Lower leg skin (tissue), 4 donors: ENCODE measurements at regions of chr2 and their contacts with region 1.

Region 1: DNA sequence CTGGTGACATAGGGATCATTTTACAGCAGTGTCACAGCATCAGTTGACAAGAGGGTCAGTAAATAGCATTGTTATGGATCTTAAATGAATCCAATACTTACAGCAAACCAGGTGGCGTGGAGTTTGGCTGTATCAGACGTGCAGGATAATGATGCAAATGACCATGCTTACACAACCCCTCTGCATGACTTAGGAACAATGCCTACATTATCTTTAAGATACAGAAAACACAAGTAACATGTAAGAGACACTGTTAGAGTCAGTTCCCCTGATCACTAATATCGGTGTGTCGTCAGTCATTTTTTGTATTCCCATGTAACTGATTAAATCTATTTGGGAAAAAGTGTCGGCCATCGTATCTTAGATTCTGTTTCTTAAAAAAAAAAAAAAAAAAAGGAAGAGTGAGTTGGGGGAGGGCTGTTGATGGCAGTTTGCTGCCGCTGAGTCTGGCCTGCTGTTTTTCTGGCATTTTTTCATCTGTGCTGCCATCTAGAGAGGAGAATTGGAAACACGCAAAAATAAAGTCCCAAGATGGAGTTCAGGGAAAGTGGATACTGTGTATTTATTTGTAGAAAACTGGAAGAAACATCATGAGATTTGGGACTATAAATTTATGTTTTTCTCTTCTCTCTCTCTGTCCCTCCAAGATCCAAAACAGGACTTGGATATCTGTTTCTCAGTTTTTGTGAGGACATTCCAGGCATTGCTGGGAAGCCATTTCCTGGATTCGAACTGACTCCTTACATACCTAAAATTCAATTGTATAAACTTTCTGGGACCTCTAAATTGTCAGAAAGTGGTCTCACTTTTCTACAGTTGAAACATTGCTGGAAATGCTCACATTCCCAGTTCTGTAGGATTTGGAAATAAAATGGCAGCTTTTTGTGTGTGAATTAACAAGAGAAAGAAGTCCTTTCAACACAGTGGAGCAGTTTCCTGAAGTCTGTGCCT is 60.3 kb upstream of the AGPS start:
- DNase-seq: peak in 1 of 2 donors; percentile 47
- H3K4me3 ChIP-seq: no peak overlapping the region
- CTCF ChIP-seq: no peak
- POLR2A ChIP-seq: no peak

Region 2: DNA sequence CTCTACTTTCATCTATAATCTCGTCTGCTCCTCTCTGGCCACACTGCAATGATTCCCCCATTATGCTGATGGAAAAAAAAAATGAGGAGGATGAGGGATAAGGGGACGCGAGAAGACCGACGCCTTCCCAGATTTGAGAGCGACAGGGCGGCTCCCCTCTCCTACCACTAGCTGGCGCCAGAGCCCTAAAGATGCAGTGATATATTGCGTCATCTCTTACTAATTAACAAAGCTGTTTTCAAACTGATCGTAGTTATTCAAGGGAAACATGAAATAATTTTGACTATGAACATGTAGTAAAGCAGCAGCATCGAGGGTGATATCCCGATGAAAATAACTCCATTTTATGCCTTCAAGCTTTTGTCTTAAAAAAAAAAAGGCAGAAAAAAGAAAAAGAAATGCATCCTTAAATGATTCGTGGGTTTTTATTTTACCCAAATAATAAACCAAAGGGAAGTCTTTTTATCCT is 167.7 kb before region 1 on chr2:
- intact Hi-C with region 1: loop called (anchors 5 kb)
- DNase-seq: peak; percentile 89 to 95
- H3K4me3 ChIP-seq: no peak overlapping the region
- CTCF ChIP-seq: peak in 2 of 3 donors; percentile 66 to 96
- POLR2A ChIP-seq: no peak

Region 3: DNA sequence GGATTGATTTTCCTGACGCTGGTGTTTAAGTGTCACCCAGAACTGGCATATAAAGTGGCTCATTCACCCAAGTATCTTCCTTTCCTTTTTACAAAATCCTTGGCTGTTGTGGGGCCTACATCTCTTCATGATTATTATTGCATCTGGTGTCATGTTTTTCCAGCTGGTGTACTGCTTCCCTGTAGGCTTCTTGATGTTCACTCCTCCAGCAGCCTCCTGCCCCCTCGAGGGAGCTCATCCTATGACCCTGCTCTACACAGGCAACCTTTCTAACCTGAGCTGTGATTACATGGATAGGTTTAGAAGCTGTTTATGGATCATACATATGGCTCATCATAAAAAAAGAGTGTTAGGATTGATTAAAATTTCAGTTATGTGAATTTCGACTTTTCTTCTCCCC is 47.9 kb after region 1 on chr2:
- intact Hi-C with region 1: no loop called
- DNase-seq: no peak
- H3K4me3 ChIP-seq: no peak overlapping the region
- CTCF ChIP-seq: no peak
- POLR2A ChIP-seq: no peak

Region 4: DNA sequence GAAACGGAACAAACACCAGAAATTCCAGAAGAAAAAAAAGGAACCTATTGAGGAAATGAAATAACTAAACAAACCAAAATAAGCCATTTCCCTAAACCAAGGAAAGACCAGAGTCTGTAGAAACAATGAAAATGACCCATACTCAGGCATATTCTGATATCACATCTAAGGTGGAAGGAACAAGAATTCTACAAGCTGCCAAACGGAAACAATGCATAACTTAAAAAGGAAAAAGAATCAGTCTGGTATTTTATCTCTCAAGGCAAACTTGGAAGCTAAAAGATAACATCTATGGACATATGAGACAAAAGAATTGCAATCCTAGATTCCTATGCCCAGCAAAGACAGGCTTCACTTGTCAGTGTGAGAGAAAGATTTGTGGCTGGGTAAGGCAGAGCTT is 414.0 kb after region 1 on chr2:
- intact Hi-C with region 1: no loop called
- DNase-seq: no peak
- H3K4me3 ChIP-seq: no peak overlapping the region
- CTCF ChIP-seq: no peak
- POLR2A ChIP-seq: no peak

Region 5: DNA sequence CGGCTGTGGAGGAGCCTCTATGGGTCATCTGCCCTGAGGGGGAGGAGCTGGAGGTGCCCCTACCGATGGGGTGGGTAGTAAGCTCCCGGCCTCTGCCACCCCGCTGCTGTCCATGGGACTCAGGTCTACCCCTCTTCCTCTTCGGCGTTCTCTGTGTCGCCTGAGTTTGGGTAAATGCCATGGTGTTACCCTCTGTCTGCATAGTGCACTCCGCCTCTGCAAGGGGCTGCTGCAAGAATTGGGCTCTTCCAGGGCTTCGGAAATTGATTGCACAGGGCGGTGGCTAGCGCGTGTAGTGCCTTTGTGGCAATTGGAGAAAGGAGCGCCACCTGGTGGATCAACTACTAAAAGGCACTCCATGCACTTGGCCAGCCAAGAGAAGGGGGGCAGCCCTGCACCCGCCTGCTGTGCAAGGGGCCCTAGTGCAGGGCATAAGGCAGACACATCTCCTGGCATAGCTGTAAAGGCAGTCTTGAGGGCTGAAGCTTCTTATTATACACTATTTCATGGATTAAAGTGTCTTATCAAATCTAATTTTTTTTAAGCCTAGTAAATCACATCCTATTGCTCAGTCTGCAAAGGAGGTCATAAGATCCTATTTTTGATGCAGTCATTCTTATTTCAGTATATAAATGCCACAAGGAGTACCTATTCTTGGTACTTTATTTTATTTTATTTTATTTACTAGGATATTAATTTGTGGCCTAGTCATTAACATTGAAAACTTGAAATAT is 431.4 kb after region 1 on chr2:
- intact Hi-C with region 1: loop called (anchors 10 kb)
- DNase-seq: peak; percentile 41 to 92
- H3K4me3 ChIP-seq: no peak overlapping the region
- CTCF ChIP-seq: no peak
- POLR2A ChIP-seq: no peak